Caco-2 (cell line): ENCODE measurements at regions of chr6 and their contacts with region 1.

Region 1: GRCh38 chr6:81752138-81752920 is at the start of gene TENT5A:
- DNase-seq: peak; percentile 96
- H3K4me3 ChIP-seq: peak within 1 kb of the TSS; percentile 89
- H3K4me3 Mint-ChIP-seq: peak within 1 kb of the TSS; percentile 95
- H3K27ac Mint-ChIP-seq: peak within 1 kb of the TSS; percentile 73
- H3K4me1 ChIP-seq: peaks cover 22% of the 10 kb centered on the region
- H3K4me1 Mint-ChIP-seq: peaks cover 33% of the 10 kb centered on the region
- H3K27me3 ChIP-seq: no peaks in the 10 kb centered on the region
- H3K27me3 Mint-ChIP-seq: no peaks in the 10 kb centered on the region
- CTCF ChIP-seq: peak; percentile 18 to 44
- total RNA-seq, gene TENT5A: 45.0 and 49.6 TPM in 2 replicates

Region 2: DNA sequence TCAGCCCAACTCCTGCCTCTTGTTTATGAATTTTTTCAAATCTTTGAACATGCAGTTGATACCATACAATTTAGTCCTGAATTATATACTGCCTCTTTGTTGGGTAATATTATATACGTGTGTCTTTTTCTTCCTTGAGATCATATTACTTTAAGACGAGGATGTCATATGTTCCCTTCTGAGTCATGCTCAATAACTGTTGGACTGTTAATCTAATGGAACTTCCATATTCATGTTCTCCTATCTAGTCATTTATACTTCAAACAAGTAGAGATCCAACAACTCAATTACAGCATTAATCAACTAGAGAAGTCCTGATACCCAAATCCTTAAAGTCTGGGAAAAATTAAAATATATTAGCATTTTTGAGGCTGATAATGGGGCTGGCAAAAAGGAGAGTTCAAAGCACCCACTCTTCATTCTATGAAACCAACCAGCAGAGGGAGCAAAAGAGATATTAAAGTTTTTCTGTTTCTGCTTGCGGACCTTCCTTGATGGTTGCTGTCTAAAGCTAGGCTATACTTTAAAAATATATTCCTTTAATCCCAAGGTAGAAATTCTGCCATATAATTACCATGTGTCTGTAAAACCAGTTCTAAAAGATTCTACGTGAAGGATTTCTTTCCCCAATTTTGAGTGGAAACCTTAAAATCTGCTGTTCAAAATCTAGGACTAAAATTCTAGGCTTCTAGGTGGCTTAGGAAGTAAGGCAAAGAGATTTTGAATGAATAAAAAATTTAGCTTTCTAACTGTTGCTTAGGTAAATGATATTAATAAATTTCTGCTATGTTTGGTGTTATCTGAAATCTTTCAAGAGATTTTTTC is 1147.0 kb before region 1 on chr6:
- CTCF ChIA-PET with region 1: no interaction called
- POLR2A ChIA-PET with region 1: no interaction called
- intact Hi-C with region 1: loop called (anchors 5 kb)
- DNase-seq: peak in 1 of 2 experiments; percentile 39
- H3K4me3 ChIP-seq: no peak overlapping the region
- H3K4me3 Mint-ChIP-seq: no peak overlapping the region
- H3K27ac Mint-ChIP-seq: no peak overlapping the region
- H3K4me1 ChIP-seq: no peaks in the 10 kb centered on the region
- H3K4me1 Mint-ChIP-seq: no peaks in the 10 kb centered on the region
- H3K27me3 ChIP-seq: no peaks in the 10 kb centered on the region
- H3K27me3 Mint-ChIP-seq: peaks cover 13% of the 10 kb centered on the region
- CTCF ChIP-seq: peak; percentile 59 to 64

Region 3: GRCh38 chr6:81241126-81242041 is 510.9 kb before region 1 on chr6:
- CTCF ChIA-PET with region 1: interaction called, 9 read pairs
- POLR2A ChIA-PET with region 1: interaction called, 3 read pairs
- intact Hi-C with region 1: loop called (anchors 1 kb)
- DNase-seq: peak in 1 of 2 experiments; percentile 38
- H3K4me3 ChIP-seq: no peak overlapping the region
- H3K4me3 Mint-ChIP-seq: no peak overlapping the region
- H3K27ac Mint-ChIP-seq: no peak overlapping the region
- H3K4me1 ChIP-seq: no peaks in the 10 kb centered on the region
- H3K4me1 Mint-ChIP-seq: no peaks in the 10 kb centered on the region
- H3K27me3 ChIP-seq: no peaks in the 10 kb centered on the region
- H3K27me3 Mint-ChIP-seq: peaks cover 3% of the 10 kb centered on the region
- CTCF ChIP-seq: peak; percentile 34 to 41

Region 4: DNA sequence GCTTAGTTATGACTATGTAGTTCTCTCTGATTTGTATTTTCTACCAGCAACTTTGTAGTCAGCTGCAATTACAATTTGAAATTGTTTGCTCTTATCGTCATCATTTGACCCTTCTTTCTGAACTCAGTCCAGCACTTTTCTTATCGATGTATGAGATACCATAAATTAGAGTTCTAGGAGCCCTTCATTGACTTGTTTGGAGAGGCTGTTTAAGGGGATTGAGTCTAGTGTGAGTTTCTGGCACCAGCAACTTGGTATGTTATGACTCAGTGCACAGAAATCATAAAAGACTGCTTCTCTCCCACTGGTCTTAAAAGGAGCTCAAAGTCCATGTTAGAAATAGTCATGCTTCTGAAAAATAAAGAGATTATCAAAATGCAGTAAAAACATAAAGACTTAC is 190.2 kb before region 1 on chr6:
- CTCF ChIA-PET with region 1: interaction called, 3 read pairs
- POLR2A ChIA-PET with region 1: interaction called, 4 read pairs
- intact Hi-C with region 1: loop called (anchors 1 kb)
- DNase-seq: peak; percentile 60 to 64
- H3K4me3 ChIP-seq: no peak overlapping the region
- H3K4me3 Mint-ChIP-seq: peak overlapping the region; percentile 59
- H3K27ac Mint-ChIP-seq: peak overlapping the region; percentile 51
- H3K4me1 ChIP-seq: peaks cover 57% of the 10 kb centered on the region
- H3K4me1 Mint-ChIP-seq: peaks cover 8% of the 10 kb centered on the region
- H3K27me3 ChIP-seq: no peaks in the 10 kb centered on the region
- H3K27me3 Mint-ChIP-seq: no peaks in the 10 kb centered on the region
- CTCF ChIP-seq: no peak

Region 5: DNA sequence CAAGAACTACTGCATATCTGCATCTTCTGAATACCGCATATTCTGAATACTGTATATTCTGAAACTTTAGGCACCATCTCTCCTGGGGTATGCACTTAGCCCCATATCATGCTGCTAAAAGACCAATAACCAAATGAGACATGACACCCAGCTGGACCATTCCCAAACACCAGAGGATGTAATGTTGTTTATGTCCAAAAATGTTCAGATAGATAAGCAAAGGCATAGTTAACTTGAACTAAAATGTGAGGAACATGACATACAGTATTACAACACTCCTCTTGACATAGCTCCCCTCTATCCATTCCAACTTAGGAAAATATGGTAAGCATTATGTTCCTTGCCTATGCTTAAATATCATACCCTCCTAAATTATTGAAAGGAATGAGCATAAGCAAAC is 127.1 kb before region 1 on chr6:
- CTCF ChIA-PET with region 1: interaction called, 5 read pairs
- POLR2A ChIA-PET with region 1: interaction called, 4 read pairs
- intact Hi-C with region 1: loop called (anchors 1 kb)
- DNase-seq: no peak
- H3K4me3 ChIP-seq: no peak overlapping the region
- H3K4me3 Mint-ChIP-seq: no peak overlapping the region
- H3K27ac Mint-ChIP-seq: no peak overlapping the region
- H3K4me1 ChIP-seq: peaks cover 43% of the 10 kb centered on the region
- H3K4me1 Mint-ChIP-seq: peaks cover 34% of the 10 kb centered on the region
- H3K27me3 ChIP-seq: no peaks in the 10 kb centered on the region
- H3K27me3 Mint-ChIP-seq: no peaks in the 10 kb centered on the region
- CTCF ChIP-seq: no peak

Region 6: DNA sequence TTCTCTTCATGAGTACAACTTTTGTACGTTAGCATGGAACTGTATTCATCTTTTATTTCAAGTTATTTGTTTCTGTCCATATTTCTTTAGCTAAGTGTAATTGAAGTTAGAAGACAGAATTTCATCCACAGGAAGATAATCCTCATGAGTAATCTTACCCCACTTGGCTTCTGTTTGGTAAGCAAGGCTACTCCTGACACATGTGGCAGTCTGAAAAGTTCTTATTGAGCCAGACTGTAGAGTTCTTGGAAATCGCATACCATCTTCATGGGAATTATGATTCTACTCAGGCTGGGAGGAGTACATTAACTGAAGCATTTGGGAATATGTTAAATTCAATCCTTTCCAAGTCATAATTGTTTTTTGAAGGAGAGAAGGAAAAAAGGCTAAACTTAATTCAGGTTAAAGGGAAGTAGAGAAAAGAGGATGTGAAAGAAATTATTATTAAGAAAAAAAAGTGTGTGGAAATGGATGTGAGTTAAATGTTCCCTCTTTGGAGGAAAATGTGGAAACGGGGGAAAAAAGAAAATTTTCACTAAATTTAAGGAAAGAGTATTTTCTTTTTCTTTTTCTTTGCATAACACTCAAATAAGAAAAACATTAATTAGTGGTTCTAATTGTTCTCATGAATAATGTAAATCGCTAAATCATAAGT is 41.6 kb after region 1 on chr6:
- CTCF ChIA-PET with region 1: no interaction called
- POLR2A ChIA-PET with region 1: no interaction called
- intact Hi-C with region 1: no loop called
- DNase-seq: no peak
- H3K4me3 ChIP-seq: no peak overlapping the region
- H3K4me3 Mint-ChIP-seq: no peak overlapping the region
- H3K27ac Mint-ChIP-seq: no peak overlapping the region
- H3K4me1 ChIP-seq: peaks cover 9% of the 10 kb centered on the region
- H3K4me1 Mint-ChIP-seq: peaks cover 7% of the 10 kb centered on the region
- H3K27me3 ChIP-seq: no peaks in the 10 kb centered on the region
- H3K27me3 Mint-ChIP-seq: no peaks in the 10 kb centered on the region
- CTCF ChIP-seq: no peak

Region 7: DNA sequence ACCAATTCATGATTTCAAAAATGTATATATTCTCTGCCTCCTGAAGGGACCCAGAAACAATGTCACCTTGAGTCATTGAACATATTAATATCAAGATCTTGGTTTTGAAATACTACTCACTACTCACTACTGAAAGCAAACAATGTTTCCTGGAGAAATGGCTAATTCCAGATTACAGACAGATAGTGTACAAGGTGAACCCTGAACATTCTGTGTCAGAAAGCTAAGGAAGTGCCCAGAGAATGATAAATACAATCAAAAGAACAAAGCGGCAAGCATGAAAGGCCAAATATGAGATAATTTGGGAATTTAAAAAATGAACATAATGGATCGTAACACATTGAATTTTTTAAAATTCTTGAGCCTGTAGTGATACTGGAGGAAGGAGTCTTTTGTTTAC is 101.7 kb after region 1 on chr6:
- CTCF ChIA-PET with region 1: interaction called, 3 read pairs
- POLR2A ChIA-PET with region 1: no interaction called
- intact Hi-C with region 1: loop called (anchors 5 kb)
- DNase-seq: peak in 1 of 2 experiments; percentile 63
- H3K4me3 ChIP-seq: no peak overlapping the region
- H3K4me3 Mint-ChIP-seq: peak overlapping the region; percentile 58
- H3K27ac Mint-ChIP-seq: peak overlapping the region; percentile 87
- H3K4me1 ChIP-seq: peaks cover 51% of the 10 kb centered on the region
- H3K4me1 Mint-ChIP-seq: peaks cover 37% of the 10 kb centered on the region
- H3K27me3 ChIP-seq: no peaks in the 10 kb centered on the region
- H3K27me3 Mint-ChIP-seq: no peaks in the 10 kb centered on the region
- CTCF ChIP-seq: no peak

Region 8: GRCh38 chr6:82040405-82041221 is 288.3 kb after region 1 on chr6:
- CTCF ChIA-PET with region 1: interaction called, 10 read pairs
- POLR2A ChIA-PET with region 1: no interaction called
- intact Hi-C with region 1: loop called (anchors 1 kb)
- DNase-seq: peak; percentile 53 to 70
- H3K4me3 ChIP-seq: no peak overlapping the region
- H3K4me3 Mint-ChIP-seq: no peak overlapping the region
- H3K27ac Mint-ChIP-seq: peak overlapping the region; percentile 45
- H3K4me1 ChIP-seq: peaks cover 4% of the 10 kb centered on the region; the same call in 1 of the 2 replicates
- H3K4me1 Mint-ChIP-seq: no peaks in the 10 kb centered on the region
- H3K27me3 ChIP-seq: no peaks in the 10 kb centered on the region
- H3K27me3 Mint-ChIP-seq: no peaks in the 10 kb centered on the region
- CTCF ChIP-seq: peak; percentile 87